CD4-positive, alpha-beta memory T cell (primary cell): ENCODE measurements at regions of chr6 and their contacts with region 1.

Region 1: GRCh38 chr6:31559958-31560696 is 12.0 kb upstream of the LTA start:
- DNase-seq: peak in 3 of 5 donors; percentile 35 to 76 (median 38)
- H3K4me3 ChIP-seq: peak overlapping the region in 1 of 2 donors; percentile 53
- H3K4me3 Mint-ChIP-seq: peak overlapping the region; percentile 78 to 90 (median 84)
- H3K27ac ChIP-seq: peak overlapping the region; percentile 58
- H3K27ac Mint-ChIP-seq: peak overlapping the region; percentile 91 to 99 (median 95)
- H3K4me1 ChIP-seq: peaks cover 87% of the 10 kb centered on the region
- H3K4me1 Mint-ChIP-seq: peaks cover 53 to 87% (median 65%) of the 10 kb centered on the region in 4 donors
- H3K27me3 ChIP-seq: no peaks in the 10 kb centered on the region
- H3K27me3 Mint-ChIP-seq: no peaks in the 10 kb centered on the region

Region 2: DNA sequence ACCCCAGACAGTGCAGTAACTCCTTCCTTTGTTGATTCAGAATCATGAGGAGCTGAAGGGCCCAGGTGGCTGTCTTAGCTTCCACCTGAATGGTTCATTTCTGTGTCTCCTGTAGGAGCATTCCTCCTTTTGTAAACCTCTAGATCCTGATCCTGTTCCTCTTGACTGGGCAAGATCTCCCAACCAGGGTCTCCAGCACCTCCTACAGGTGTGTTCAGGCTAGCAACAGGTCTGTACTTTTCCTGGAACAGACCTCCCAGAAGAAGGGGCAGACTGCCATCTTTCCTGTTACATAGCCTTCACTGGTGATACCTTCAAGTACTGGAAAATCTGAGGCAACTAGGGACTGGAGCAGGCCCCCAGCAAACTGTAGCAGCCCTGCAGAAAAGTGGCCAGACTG is 238.3 kb before region 1 on chr6:
- CTCF ChIA-PET with region 1: no interaction called
- POLR2A ChIA-PET with region 1: no interaction called
- intact Hi-C with region 1: no loop called
- DNase-seq: no peak
- H3K4me3 ChIP-seq: no peak overlapping the region
- H3K4me3 Mint-ChIP-seq: no peak overlapping the region
- H3K27ac ChIP-seq: no peak overlapping the region
- H3K27ac Mint-ChIP-seq: peak overlapping the region in 1 of 7 donors; percentile 27
- H3K4me1 ChIP-seq: no peaks in the 10 kb centered on the region
- H3K4me1 Mint-ChIP-seq: no peaks in the 10 kb centered on the region
- H3K27me3 ChIP-seq: no peaks in the 10 kb centered on the region
- H3K27me3 Mint-ChIP-seq: peaks cover 21 to 23% of the 10 kb centered on the region in 2 donors

Region 3: GRCh38 chr6:31575335-31575901 is 15.3 kb after region 1 on chr6 and contains the start of gene TNF:
- CTCF ChIA-PET with region 1: interaction called, 595 read pairs
- POLR2A ChIA-PET with region 1: interaction called, 3,597 read pairs
- intact Hi-C with region 1: loop called (anchors 1 kb)
- DNase-seq: peak; percentile 71 to 92 (median 74)
- H3K4me3 ChIP-seq: peak within 1 kb of the TSS; percentile 87 to 99
- H3K4me3 Mint-ChIP-seq: peak within 1 kb of the TSS; percentile 88 to 100 (median 98)
- H3K27ac ChIP-seq: peak within 1 kb of the TSS; percentile 83
- H3K27ac Mint-ChIP-seq: peak within 1 kb of the TSS; percentile 96 to 100 (median 99)
- H3K4me1 ChIP-seq: peaks cover 82% of the 10 kb centered on the region
- H3K4me1 Mint-ChIP-seq: peaks cover 58 to 97% (median 73%) of the 10 kb centered on the region in 4 donors
- H3K27me3 ChIP-seq: no peaks in the 10 kb centered on the region
- H3K27me3 Mint-ChIP-seq: no peaks in the 10 kb centered on the region
- total RNA-seq, gene TNF: 25.0 to 28.2 TPM